ENCODE measurements at regions of chr10 and their contacts with region 1.

Region 1: GRCh38 chr10:45464958-45465567 is 91.0 kb downstream of the ALOX5 start:
- DNase-seq: peak; percentile 70
- H3K4me3 Mint-ChIP-seq: no peak overlapping the region
- H3K27ac Mint-ChIP-seq: no peak overlapping the region
- H3K4me1 Mint-ChIP-seq: no peaks in the 10 kb centered on the region
- H3K27me3 Mint-ChIP-seq: no peaks in the 10 kb centered on the region
- CTCF ChIP-seq: peak; percentile 83

Region 2: DNA sequence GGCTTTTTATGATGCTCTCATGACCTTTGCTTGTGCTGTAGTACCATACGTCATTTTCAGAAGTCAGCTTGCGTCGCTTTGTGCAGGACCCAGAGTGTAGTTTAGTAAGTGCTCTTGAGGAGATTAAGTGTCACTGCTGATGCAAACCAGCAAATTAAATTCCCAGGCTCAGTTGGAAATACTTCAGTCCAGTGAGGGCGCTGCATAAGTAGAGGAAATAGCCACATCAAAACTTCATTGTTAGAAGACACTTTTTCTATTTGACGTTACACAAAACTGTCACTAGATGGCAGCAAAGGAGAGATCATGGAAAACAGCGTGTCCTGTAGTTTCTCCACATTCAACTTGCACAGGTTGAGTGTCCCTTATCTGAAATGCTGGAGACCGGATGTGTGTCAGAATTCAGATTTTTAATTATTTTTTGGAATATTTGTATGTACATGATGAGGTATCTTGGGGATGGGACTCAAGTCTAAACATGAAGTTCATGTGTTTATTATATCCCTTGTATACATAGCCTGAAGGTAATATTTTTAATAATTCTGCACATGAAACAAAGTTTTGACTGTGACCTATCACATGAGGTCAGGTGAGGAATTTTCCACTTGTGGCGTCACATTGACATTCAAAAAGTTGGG is 456.4 kb before region 1 on chr10:
- CTCF ChIA-PET with region 1: no interaction called
- POLR2A ChIA-PET with region 1: no interaction called
- intact Hi-C with region 1: loop called (anchors 5 kb)
- DNase-seq: peak; percentile 89
- H3K4me3 Mint-ChIP-seq: no peak overlapping the region
- H3K27ac Mint-ChIP-seq: no peak overlapping the region
- H3K4me1 Mint-ChIP-seq: no peaks in the 10 kb centered on the region
- H3K27me3 Mint-ChIP-seq: no peaks in the 10 kb centered on the region
- CTCF ChIP-seq: peak; percentile 63

Region 3: GRCh38 chr10:45235798-45236231 is 229.2 kb before region 1 on chr10:
- CTCF ChIA-PET with region 1: interaction called, 5 read pairs
- POLR2A ChIA-PET with region 1: no interaction called
- intact Hi-C with region 1: loop called (anchors 10 kb)
- DNase-seq: peak; percentile 34
- H3K4me3 Mint-ChIP-seq: no peak overlapping the region
- H3K27ac Mint-ChIP-seq: no peak overlapping the region
- H3K4me1 Mint-ChIP-seq: no peaks in the 10 kb centered on the region
- H3K27me3 Mint-ChIP-seq: no peaks in the 10 kb centered on the region
- CTCF ChIP-seq: no peak

Region 4: GRCh38 chr10:45433716-45434469 is 31.2 kb before region 1 on chr10:
- CTCF ChIA-PET with region 1: interaction called, 12 read pairs
- POLR2A ChIA-PET with region 1: no interaction called
- intact Hi-C with region 1: no loop called
- DNase-seq: no peak
- H3K4me3 Mint-ChIP-seq: no peak overlapping the region
- H3K27ac Mint-ChIP-seq: no peak overlapping the region
- H3K4me1 Mint-ChIP-seq: peaks cover 11% of the 10 kb centered on the region
- H3K27me3 Mint-ChIP-seq: no peaks in the 10 kb centered on the region
- CTCF ChIP-seq: no peak

Region 5: GRCh38 chr10:45445327-45445898 is 19.6 kb before region 1 on chr10:
- CTCF ChIA-PET with region 1: interaction called, 11 read pairs
- POLR2A ChIA-PET with region 1: no interaction called
- intact Hi-C with region 1: no loop called
- DNase-seq: no peak
- H3K4me3 Mint-ChIP-seq: no peak overlapping the region
- H3K27ac Mint-ChIP-seq: no peak overlapping the region
- H3K4me1 Mint-ChIP-seq: no peaks in the 10 kb centered on the region
- H3K27me3 Mint-ChIP-seq: no peaks in the 10 kb centered on the region
- CTCF ChIP-seq: no peak

Region 6: DNA sequence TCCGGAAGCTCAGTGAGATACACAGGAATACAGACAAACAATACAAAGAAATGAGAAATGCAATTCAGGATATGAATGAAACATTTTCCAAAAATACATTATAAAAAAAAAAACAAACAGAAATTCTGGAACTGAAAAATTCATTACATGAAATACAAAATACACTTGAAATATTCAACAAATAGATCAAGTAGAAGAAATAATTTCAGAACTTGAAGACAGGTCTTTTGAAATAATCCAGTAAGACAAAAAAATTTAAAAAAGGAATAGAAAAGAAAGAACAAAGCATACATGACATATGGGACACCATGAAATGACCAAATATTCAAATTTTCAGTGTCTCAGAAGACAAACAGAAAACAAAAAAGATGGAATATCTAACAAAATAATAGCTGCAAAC is 11.5 kb after region 1 on chr10:
- CTCF ChIA-PET with region 1: interaction called, 10 read pairs
- POLR2A ChIA-PET with region 1: no interaction called
- intact Hi-C with region 1: no loop called
- DNase-seq: no peak
- H3K4me3 Mint-ChIP-seq: no peak overlapping the region
- H3K27ac Mint-ChIP-seq: no peak overlapping the region
- H3K4me1 Mint-ChIP-seq: no peaks in the 10 kb centered on the region
- H3K27me3 Mint-ChIP-seq: no peaks in the 10 kb centered on the region
- CTCF ChIP-seq: no peak

Region 7: GRCh38 chr10:45500304-45500703 is 35.2 kb after region 1 on chr10:
- CTCF ChIA-PET with region 1: no interaction called
- POLR2A ChIA-PET with region 1: no interaction called
- intact Hi-C with region 1: no loop called
- DNase-seq: no peak
- H3K4me3 Mint-ChIP-seq: no peak overlapping the region
- H3K27ac Mint-ChIP-seq: no peak overlapping the region
- H3K4me1 Mint-ChIP-seq: no peaks in the 10 kb centered on the region
- H3K27me3 Mint-ChIP-seq: no peaks in the 10 kb centered on the region
- CTCF ChIP-seq: no peak

Region 8: GRCh38 chr10:45526309-45526905 is 61.3 kb after region 1 on chr10:
- CTCF ChIA-PET with region 1: no interaction called
- POLR2A ChIA-PET with region 1: no interaction called
- intact Hi-C with region 1: no loop called
- DNase-seq: no peak
- H3K4me3 Mint-ChIP-seq: no peak overlapping the region
- H3K27ac Mint-ChIP-seq: no peak overlapping the region
- H3K4me1 Mint-ChIP-seq: no peaks in the 10 kb centered on the region
- H3K27me3 Mint-ChIP-seq: no peaks in the 10 kb centered on the region
- CTCF ChIP-seq: no peak

Region 9: GRCh38 chr10:45672181-45673073 is 207.4 kb after region 1 on chr10 and contains the start of gene ZFAND4:
- CTCF ChIA-PET with region 1: interaction called, 21 read pairs
- POLR2A ChIA-PET with region 1: interaction called, 4 read pairs
- intact Hi-C with region 1: loop called (anchors 1 kb)
- DNase-seq: peak; percentile 94
- H3K4me3 Mint-ChIP-seq: peak within 1 kb of the TSS; percentile 81
- H3K27ac Mint-ChIP-seq: peak within 1 kb of the TSS; percentile 70
- H3K4me1 Mint-ChIP-seq: no peaks in the 10 kb centered on the region
- H3K27me3 Mint-ChIP-seq: no peaks in the 10 kb centered on the region
- CTCF ChIP-seq: peak; percentile 55
- total RNA-seq, gene ZFAND4: 4.9 and 5.0 TPM in 2 replicates

Measured in MCF 10A (cell line).